Panc1 (cell line): ENCODE measurements at regions of chr4 and their contacts with region 1.

Region 1: DNA sequence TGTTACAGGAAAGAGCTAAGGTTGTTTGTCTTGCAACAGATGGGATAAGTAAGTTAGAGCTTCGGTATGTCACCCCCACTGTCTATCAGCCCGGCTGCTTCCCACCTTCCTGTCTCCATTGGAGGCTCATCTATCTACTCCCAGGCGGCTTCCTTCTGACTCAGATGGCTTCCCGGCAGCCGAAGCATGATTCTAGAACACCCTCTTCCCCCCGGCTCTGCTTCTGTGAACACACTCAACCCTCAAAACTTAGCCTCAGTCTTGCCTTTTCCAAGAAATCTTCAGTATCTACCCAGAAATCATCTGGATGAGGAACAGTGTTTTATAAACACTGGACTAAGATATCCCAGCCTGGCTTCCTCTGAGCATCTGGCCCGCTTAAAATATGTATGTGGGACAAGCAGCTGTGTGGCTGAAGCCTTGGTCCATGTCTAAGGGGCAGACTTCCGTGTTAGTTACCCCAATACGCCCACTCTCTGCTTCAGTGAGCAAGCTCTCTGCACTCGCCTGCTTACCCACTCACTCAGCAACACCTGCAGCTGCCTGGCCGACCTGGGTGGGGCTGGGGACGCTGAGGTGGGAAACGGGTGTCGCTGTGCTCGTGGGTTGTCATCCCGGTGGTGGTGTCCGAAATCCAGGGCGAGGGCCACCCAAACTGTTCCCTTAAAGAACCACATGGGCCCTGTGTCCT is 12.0 kb upstream of the SLC2A9 start:
- DNase-seq: no peak
- ATAC-seq: no peak
- H3K4me3 ChIP-seq: no peak overlapping the region
- H3K27ac ChIP-seq: no peak overlapping the region
- H3K4me1 ChIP-seq: no peaks in the 10 kb centered on the region; the same call in 1 of the 2 replicates
- H3K27me3 ChIP-seq: no peaks in the 10 kb centered on the region
- CTCF ChIP-seq: no peak

Region 2: DNA sequence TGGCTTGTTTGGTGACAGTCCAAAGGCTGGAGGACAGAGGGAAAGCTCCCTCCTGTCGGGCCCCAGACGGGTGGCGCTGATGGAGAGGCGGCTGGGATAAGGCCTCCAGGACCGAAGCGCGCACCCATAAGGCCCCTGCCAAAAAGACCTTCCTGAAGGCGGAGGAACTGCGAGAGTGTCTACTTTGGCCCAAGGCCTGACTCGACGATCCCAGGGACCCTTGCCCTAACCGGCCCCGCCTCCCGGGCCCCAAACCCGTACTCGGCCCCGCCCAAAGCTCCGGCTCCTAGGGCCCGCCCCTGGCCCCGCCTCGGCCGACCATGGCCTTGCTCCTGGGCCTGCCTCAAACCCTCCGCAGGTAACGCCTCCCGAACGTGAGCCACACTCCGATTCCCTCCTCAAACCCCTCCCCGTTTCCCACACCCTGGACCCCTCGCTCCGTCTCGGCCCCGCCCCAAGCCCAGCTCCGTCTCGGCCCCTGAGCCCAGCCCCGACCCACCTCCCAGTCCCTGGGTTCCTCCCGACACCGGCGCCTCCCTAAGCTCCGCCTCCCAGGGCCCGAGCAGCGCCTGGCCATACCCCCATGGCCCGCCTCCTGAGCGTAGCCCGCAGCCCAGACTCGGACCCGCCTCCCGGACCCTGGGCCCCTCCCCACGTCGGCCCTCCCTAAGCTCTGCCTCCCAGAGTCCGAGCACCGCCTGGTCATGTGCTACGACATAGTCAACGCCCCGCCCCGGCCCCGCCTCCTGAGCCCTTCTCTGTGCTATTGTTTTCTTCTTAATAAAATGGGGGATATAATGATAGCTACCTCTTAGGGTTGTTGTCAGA is 341.9 kb before region 1 on chr4:
- CTCF ChIA-PET with region 1: interaction called, 13 read pairs
- POLR2A ChIA-PET with region 1: no interaction called
- in situ Hi-C with region 1: no loop called
- intact Hi-C with region 1: no loop called
- DNase-seq: peak; percentile 43
- ATAC-seq: peak; percentile 100
- H3K4me3 ChIP-seq: peak overlapping the region; percentile 41 to 57
- H3K27ac ChIP-seq: no peak overlapping the region
- H3K4me1 ChIP-seq: no peaks in the 10 kb centered on the region
- H3K27me3 ChIP-seq: no peaks in the 10 kb centered on the region
- CTCF ChIP-seq: no peak

Region 3: DNA sequence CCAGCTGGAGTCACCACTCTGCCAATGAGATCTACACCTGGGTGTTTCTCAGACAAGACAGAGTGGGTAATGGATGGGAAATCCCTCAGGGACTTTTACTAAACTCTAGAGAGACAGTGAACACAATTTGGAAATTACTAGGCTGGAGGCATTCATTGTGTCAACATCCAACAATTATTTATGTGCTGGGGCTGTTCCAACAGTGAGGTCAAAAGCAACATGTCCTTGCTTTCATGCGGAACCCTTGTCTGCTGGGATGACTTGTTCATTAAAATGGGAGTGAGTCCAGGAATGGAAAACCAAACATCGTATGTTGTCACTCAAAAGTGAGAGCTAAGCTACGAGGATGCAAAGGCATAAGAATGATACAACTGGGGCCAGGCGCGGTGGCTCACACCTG is 197.9 kb before region 1 on chr4:
- CTCF ChIA-PET with region 1: interaction called, 11 read pairs
- POLR2A ChIA-PET with region 1: no interaction called
- in situ Hi-C with region 1: no loop called
- intact Hi-C with region 1: no loop called
- DNase-seq: no peak
- ATAC-seq: no peak
- H3K4me3 ChIP-seq: no peak overlapping the region
- H3K27ac ChIP-seq: no peak overlapping the region
- H3K4me1 ChIP-seq: no peaks in the 10 kb centered on the region
- H3K27me3 ChIP-seq: no peaks in the 10 kb centered on the region
- CTCF ChIP-seq: no peak

Region 4: GRCh38 chr4:10803713-10804343 is 770.5 kb after region 1 on chr4:
- CTCF ChIA-PET with region 1: no interaction called
- POLR2A ChIA-PET with region 1: no interaction called
- in situ Hi-C with region 1: no loop called
- intact Hi-C with region 1: no loop called
- DNase-seq: no peak
- ATAC-seq: no peak
- H3K4me3 ChIP-seq: no peak overlapping the region
- H3K27ac ChIP-seq: no peak overlapping the region
- H3K4me1 ChIP-seq: no peaks in the 10 kb centered on the region
- H3K27me3 ChIP-seq: no peaks in the 10 kb centered on the region
- CTCF ChIP-seq: no peak